HepG2 (cell line): ENCODE measurements at regions of chr2 and their contacts with region 1.

Region 1: GRCh38 chr2:54115284-54116137 is at the start of gene ACYP2:
- DNase-seq: peak; percentile 96
- ATAC-seq: peak; percentile 94
- H3K4me3 ChIP-seq: peak within 1 kb of the TSS; percentile 73 to 78 (median 75)
- H3K27ac ChIP-seq: peak within 1 kb of the TSS; percentile 94
- H3K4me1 ChIP-seq: peaks cover 18% of the 10 kb centered on the region
- H3K27me3 ChIP-seq: no peaks in the 10 kb centered on the region
- CTCF ChIP-seq: peak; percentile 60
- EP300 ChIP-seq: 0 out of 4 replicates have a peak, but pooled peaks of 1 of the 2 experiments have one; percentile 10
- POLR2A ChIP-seq: peak; percentile 94 to 98
- RAD21 ChIP-seq: peak; percentile 61
- total RNA-seq, gene ACYP2: 12.3 and 16.2 TPM in 2 replicates

Region 2: DNA sequence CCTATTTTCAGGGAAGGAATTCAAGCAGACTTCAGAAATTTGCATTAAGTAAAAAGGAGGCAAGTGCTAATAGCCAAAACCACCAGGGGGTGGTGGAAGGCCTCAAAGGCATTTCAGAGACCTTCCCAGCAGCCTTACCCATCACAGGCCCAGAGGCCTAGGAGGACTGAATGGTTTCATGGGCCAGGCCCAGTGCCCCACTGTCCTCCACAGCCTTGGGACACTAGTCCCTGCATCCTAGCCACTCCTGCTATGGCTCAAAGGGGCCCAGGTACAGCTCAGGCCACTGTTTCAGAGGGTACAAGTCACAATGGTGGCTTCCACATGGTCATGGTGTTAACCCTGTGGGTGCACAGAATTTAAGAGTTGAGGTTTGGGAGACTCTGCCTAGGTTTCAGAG is 406.5 kb before region 1 on chr2:
- CTCF ChIA-PET with region 1: no interaction called
- POLR2A ChIA-PET with region 1: no interaction called
- in situ Hi-C with region 1: no loop called
- intact Hi-C with region 1: no loop called
- DNase-seq: no peak
- ATAC-seq: no peak
- H3K4me3 ChIP-seq: no peak overlapping the region
- H3K27ac ChIP-seq: no peak overlapping the region
- H3K4me1 ChIP-seq: no peaks in the 10 kb centered on the region
- H3K27me3 ChIP-seq: no peaks in the 10 kb centered on the region
- CTCF ChIP-seq: no peak
- EP300 ChIP-seq: no peak
- POLR2A ChIP-seq: no peak
- RAD21 ChIP-seq: no peak

Region 3: GRCh38 chr2:54503192-54503591 is 387.7 kb after region 1 on chr2:
- CTCF ChIA-PET with region 1: no interaction called
- POLR2A ChIA-PET with region 1: no interaction called
- in situ Hi-C with region 1: no loop called
- intact Hi-C with region 1: loop called (anchors 2 kb)
- DNase-seq: peak; percentile 52
- ATAC-seq: peak; percentile 87
- H3K4me3 ChIP-seq: no peak overlapping the region
- H3K27ac ChIP-seq: no peak overlapping the region
- H3K4me1 ChIP-seq: peaks cover 38% of the 10 kb centered on the region
- H3K27me3 ChIP-seq: no peaks in the 10 kb centered on the region
- CTCF ChIP-seq: peak; percentile 85
- EP300 ChIP-seq: no peak
- POLR2A ChIP-seq: no peak
- RAD21 ChIP-seq: peak; percentile 80

Region 4: GRCh38 chr2:54716375-54716774 is 600.9 kb after region 1 on chr2:
- CTCF ChIA-PET with region 1: no interaction called
- POLR2A ChIA-PET with region 1: no interaction called
- in situ Hi-C with region 1: loop called (anchors 10 kb)
- intact Hi-C with region 1: no loop called
- DNase-seq: no peak
- ATAC-seq: no peak
- H3K4me3 ChIP-seq: no peak overlapping the region
- H3K27ac ChIP-seq: no peak overlapping the region
- H3K4me1 ChIP-seq: no peaks in the 10 kb centered on the region
- H3K27me3 ChIP-seq: no peaks in the 10 kb centered on the region
- CTCF ChIP-seq: no peak
- EP300 ChIP-seq: no peak
- POLR2A ChIP-seq: no peak
- RAD21 ChIP-seq: no peak